ENCODE measurements at regions of chrX and their contacts with region 1.

Region 1: DNA sequence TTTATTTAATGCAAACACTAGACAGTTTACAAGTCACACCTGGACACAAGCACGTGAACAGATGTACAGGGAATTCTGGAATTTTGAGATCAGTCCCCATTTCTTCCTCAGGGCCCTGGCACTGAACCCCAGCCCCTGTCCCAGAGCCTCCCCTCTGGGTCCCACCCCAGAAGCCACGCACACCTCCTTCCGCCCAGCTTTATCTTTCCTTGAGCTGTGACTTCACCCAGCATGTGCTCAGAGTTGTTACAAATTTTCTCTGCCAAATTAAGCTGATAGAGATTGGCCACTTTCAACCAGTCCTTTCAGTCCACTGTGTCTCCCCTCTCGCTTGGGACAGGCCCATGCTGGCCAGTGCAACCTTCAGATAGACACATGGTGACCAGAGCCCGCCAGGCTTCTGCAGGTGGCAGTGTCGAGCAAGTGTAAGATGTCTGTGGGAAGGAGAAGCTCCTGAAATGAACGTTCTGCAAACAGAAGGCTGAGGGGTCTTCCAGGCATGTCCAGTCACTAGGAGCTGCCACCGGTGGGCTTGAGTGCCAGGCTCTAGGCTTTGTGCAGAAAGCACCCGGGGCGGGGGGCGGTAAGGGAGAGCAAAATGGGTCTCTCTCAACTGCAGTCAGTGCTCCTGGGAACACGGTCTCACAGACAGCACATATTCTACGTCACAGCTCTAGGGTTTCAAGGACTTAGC is 73.3 kb downstream of the MTMR1 start:
- DNase-seq: no peak
- H3K4me3 ChIP-seq: no peak overlapping the region
- H3K27ac ChIP-seq: peak overlapping the region; percentile 86
- H3K27me3 ChIP-seq: no peaks in the 10 kb centered on the region
- CTCF ChIP-seq: no peak

Region 2: DNA sequence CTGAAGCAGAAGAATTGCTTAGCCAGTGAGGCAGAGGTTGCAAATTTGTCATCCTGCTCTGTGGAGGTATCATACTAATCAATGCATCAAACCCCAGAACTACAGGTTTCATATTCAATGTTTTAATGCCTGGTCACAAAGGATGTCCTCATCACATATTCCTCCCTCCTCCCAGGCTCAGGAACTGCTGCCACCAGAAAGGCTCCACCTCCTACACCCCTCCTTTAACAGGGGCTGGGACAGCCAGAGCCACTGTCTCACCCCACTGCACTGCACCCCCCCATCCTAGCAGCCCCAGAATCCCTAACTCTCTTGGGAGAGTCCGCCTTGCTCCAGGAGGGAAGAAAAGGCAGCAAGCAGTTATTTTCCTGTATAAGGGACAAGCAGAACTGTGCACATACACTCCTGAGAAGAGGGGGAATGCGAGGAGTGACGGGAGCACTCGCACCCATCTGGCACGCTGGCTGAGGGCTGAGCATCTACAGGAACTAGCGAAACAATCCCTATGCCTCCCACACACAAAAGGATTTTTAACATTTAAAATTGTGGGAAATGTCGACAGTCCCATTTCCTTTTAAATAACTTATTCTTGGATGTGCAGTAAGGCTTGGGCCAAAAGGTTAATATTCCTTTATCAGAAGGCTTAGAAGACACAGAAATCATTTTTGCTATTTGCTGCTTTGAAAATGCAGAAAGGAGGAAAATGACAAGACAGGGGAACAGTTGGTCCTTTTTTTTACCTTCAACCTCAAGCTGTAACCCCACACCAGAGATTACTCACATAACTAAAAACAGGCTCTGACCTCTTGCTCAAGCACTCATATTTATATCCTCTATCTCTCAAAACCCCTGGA is 104.2 kb after region 1 on chrX:
- CTCF ChIA-PET with region 1: no interaction called
- POLR2A ChIA-PET with region 1: interaction called, 11 read pairs
- DNase-seq: no peak
- H3K4me3 ChIP-seq: no peak overlapping the region
- H3K27ac ChIP-seq: peak overlapping the region; percentile 39
- H3K27me3 ChIP-seq: no peaks in the 10 kb centered on the region
- CTCF ChIP-seq: no peak

Region 3: GRCh38 chrX:151042842-151043241 is 276.3 kb after region 1 on chrX:
- CTCF ChIA-PET with region 1: no interaction called
- POLR2A ChIA-PET with region 1: no interaction called
- DNase-seq: no peak
- H3K4me3 ChIP-seq: no peak overlapping the region
- H3K27ac ChIP-seq: no peak overlapping the region
- H3K27me3 ChIP-seq: no peaks in the 10 kb centered on the region
- CTCF ChIP-seq: no peak